ENCODE measurements at regions of chr9 and their contacts with region 1.

Region 1: DNA sequence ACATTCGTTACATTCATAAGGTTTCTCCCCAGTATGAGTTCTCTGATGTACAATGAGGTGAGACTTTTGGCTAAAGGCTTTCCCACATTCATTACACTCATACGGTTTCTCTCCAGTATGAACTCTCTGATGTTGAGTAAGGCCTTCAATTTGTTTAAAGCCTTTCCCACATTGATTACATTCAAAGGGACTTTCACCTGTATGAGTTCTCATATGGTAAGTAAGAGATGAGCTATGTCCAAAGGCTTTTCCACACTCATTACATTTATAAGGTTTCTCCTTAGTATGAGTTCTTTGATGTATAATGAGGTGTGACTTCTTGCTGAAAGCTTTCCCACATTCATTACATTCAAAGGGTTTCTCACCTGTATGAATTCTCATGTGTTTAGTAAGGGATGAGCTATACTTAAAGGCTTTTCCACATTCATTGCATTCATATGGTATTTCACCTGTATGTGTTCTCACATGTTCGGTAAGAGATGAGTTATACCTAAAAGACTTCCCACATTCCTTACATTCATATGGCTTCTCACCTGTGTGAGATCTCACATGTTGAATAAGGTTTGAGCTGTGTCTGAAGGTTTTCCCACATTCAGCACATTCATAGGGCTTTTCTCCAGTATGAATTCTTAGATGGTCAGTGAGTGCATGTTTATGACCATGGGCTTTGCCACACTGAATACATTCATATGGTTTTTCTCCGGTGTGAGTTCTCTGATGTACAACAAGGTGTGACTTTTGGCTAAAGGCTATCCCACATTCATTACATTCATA is 13.5 kb downstream of the ZFP37 start:
- DNase-seq: no peak
- H3K4me3 ChIP-seq: no peak overlapping the region
- H3K27ac ChIP-seq: no peak overlapping the region
- H3K4me1 ChIP-seq: no peaks in the 10 kb centered on the region
- H3K27me3 ChIP-seq: no peaks in the 10 kb centered on the region
- CTCF ChIP-seq: no peak
- POLR2A ChIP-seq: no peak

Region 2: GRCh38 chr9:112997236-112997941 is 45.7 kb before region 1 on chr9:
- intact Hi-C with region 1: loop called (anchors 2 kb)
- DNase-seq: no peak
- H3K4me3 ChIP-seq: no peak overlapping the region
- H3K27ac ChIP-seq: no peak overlapping the region
- H3K4me1 ChIP-seq: no peaks in the 10 kb centered on the region
- H3K27me3 ChIP-seq: no peaks in the 10 kb centered on the region
- CTCF ChIP-seq: no peak
- POLR2A ChIP-seq: no peak

Region 3: DNA sequence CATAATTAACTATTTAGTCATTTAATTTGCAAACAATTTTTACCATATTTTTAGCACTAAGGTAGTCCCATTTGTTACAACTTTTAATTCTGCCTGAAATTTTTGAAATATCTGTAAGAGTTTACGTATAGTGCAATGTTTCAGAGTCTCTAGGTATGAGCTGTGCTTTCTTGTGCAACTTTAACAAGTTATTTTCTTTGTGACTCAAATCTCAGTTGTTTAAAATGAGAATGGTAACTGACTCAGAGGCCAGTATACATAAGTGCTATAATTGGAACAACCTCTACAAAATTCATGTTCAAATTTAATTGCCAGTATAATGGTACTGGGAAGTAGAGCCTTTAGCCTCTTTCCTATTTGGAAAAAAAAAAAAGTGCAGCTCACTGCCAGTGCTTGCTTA is 16.9 kb before region 1 on chr9:
- intact Hi-C with region 1: no loop called
- DNase-seq: no peak
- H3K4me3 ChIP-seq: no peak overlapping the region
- H3K27ac ChIP-seq: no peak overlapping the region
- H3K4me1 ChIP-seq: no peaks in the 10 kb centered on the region
- H3K27me3 ChIP-seq: no peaks in the 10 kb centered on the region
- CTCF ChIP-seq: no peak
- POLR2A ChIP-seq: no peak